Gastrocnemius medialis (tissue), 4 donors: ENCODE measurements at regions of chr16 and their contacts with region 1.

Region 1: GRCh38 chr16:50665128-50665878 is 15.8 kb downstream of the SNX20 start:
- DNase-seq: peak; percentile 47 to 55
- ATAC-seq: peak; percentile 64 to 75
- H3K4me3 ChIP-seq: peak overlapping the region; percentile 55 to 63 (median 56)
- H3K27ac ChIP-seq: peak overlapping the region in 3 of 4 donors; percentile 40 to 64 (median 55)
- H3K4me1 ChIP-seq: peaks cover 16 to 21% of the 10 kb centered on the region in 2 donors
- H3K27me3 ChIP-seq: no peaks in the 10 kb centered on the region
- CTCF ChIP-seq: peak; percentile 70 to 95 (median 81)
- POLR2A ChIP-seq: no peak

Region 2: GRCh38 chr16:50038756-50039529 is 626.4 kb before region 1 on chr16:
- in situ Hi-C with region 1: loop called in 1 of 4 experiments (anchors 10 kb)
- intact Hi-C with region 1: no loop called
- DNase-seq: peak; percentile 24 to 48
- ATAC-seq: no peak
- H3K4me3 ChIP-seq: no peak overlapping the region
- H3K27ac ChIP-seq: peak overlapping the region in 1 of 4 donors; percentile 21
- H3K4me1 ChIP-seq: no peaks in the 10 kb centered on the region
- H3K27me3 ChIP-seq: no peaks in the 10 kb centered on the region
- CTCF ChIP-seq: no peak
- POLR2A ChIP-seq: no peak

Region 3: DNA sequence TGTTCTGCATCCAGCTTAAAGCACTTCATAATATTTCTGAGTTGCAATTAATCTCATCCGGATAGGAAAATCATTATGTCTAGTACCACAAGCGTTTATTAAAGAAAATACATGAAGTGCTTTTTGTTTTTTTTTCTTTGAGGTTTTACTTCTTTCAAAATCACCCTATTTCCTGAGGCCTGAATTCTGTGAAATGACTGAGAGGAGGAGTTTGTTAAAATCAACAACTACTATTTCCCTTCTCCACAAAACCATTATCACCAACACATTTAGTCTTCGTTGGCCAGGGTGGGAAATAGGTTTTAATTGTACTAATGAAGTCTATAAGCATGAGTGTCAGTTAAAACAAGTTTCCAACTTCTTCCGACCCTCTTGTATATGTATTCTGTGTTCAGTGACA is 449.6 kb before region 1 on chr16:
- in situ Hi-C with region 1: loop called (anchors 10 to 25 kb)
- intact Hi-C with region 1: loop called (anchors 1 kb)
- DNase-seq: no peak
- ATAC-seq: no peak
- H3K4me3 ChIP-seq: no peak overlapping the region
- H3K27ac ChIP-seq: no peak overlapping the region
- H3K4me1 ChIP-seq: peaks cover 3 to 7% of the 10 kb centered on the region in 2 donors
- H3K27me3 ChIP-seq: no peaks in the 10 kb centered on the region
- CTCF ChIP-seq: no peak
- POLR2A ChIP-seq: no peak

Region 4: DNA sequence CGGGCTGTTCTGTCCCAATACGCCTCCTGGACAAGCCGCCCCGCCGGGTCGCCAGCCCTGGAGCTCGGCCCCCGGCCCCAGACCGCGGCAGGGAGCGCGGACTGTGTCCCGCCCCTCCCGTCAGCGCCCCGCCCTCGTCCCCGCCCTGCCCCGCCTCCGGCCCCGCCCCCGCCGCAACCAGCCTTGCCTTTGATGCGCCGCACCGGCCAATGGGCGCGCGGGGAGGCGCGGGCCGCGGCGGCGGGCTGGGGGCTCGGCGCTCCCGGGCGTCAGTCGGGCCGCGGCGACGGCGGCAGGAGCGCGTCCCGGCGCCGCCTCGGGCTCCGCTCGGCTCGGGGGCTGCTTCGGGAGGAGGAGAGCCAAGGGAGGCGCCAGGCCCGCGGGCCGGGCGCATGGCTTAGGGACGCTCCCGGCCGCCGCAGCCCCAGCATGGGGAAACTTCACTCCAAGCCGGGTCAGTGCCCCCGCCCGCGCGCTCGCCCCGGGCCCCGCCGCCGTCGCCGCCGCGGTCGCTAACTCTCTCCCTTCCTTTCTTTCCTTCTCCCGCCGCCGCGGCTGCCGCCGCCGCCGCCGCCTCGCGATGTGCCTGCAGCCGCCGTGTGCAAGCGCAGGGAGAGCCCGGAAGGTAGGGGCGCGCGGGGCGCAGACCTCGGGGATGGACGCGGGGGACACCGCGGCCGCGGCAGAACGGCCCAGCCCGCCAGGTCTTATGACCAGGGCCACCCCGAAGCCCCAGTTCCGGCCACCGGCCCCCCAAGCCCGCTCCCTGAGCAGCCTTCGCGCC is 117.0 kb before region 1 on chr16 and contains the start of gene NKD1:
- in situ Hi-C with region 1: no loop called
- intact Hi-C with region 1: loop called (anchors 1 kb)
- DNase-seq: peak; percentile 23 to 31
- ATAC-seq: peak; percentile 89 to 91
- H3K4me3 ChIP-seq: peak within 1 kb of the TSS; percentile 51 to 78 (median 66)
- H3K27ac ChIP-seq: no peak within 1 kb of the TSS
- H3K4me1 ChIP-seq: peaks cover 0 to 9% of the 10 kb centered on the region in 2 donors
- H3K27me3 ChIP-seq: peaks cover 6 to 28% (median 16%) of the 10 kb centered on the region in 3 donors
- CTCF ChIP-seq: no peak
- POLR2A ChIP-seq: peak; percentile 54 to 63
- total RNA-seq, gene NKD1: 0.10 to 0.75 (median 0.19) TPM

Region 5: GRCh38 chr16:50611332-50611934 is 53.9 kb before region 1 on chr16:
- in situ Hi-C with region 1: no loop called
- intact Hi-C with region 1: no loop called
- DNase-seq: no peak
- ATAC-seq: no peak
- H3K4me3 ChIP-seq: no peak overlapping the region
- H3K27ac ChIP-seq: no peak overlapping the region
- H3K4me1 ChIP-seq: peaks cover 0 to 12% of the 10 kb centered on the region in 2 donors
- H3K27me3 ChIP-seq: no peaks in the 10 kb centered on the region
- CTCF ChIP-seq: no peak
- POLR2A ChIP-seq: no peak

Region 6: GRCh38 chr16:50635505-50636392 is 29.6 kb before region 1 on chr16:
- in situ Hi-C with region 1: no loop called
- intact Hi-C with region 1: no loop called
- DNase-seq: no peak
- ATAC-seq: no peak
- H3K4me3 ChIP-seq: no peak overlapping the region
- H3K27ac ChIP-seq: no peak overlapping the region
- H3K4me1 ChIP-seq: no peaks in the 10 kb centered on the region
- H3K27me3 ChIP-seq: no peaks in the 10 kb centered on the region
- CTCF ChIP-seq: no peak
- POLR2A ChIP-seq: no peak

Region 7: DNA sequence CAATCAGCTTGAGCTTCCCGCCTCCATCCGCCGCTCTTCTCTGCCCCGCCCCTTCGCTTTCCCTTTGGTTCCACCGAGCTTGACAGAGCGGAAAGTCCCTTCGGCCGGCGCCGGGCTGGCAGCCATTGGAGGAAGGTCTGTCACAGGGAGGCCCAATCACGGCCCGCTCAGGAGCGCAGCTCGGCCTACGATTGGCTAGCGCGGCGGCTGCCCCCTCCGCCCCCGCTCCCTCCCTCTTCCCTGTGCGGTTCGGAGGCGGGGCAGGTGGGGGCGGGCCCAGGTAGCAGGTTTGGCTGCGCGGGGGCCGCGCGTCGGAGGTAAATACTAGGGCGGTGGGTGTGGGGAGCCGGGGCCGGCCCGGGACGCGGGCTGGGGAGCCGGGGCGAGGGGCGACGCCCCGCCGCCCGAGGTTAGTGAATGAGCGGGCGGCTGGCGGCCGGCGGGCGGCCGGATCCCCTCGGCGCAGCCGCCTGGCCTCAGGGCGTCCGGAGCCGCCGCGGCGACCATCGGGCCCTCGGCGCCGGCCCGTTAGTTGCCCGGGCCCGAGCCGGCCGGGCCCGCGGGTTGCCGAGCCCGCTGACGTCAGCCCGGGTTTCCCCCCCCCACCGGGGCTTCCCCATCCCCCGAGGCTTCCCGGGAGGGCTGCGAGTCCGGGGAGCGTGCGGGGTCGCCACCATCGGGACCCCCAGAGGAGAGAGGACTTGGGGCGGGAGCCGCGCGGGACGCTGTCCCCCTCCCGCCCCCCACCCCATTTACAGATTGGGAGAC is 76.7 kb after region 1 on chr16 and contains the start of gene CYLD:
- in situ Hi-C with region 1: no loop called
- intact Hi-C with region 1: loop called (anchors 2 kb)
- DNase-seq: peak; percentile 100
- ATAC-seq: peak; percentile 89 to 95
- H3K4me3 ChIP-seq: peak within 1 kb of the TSS; percentile 61 to 98 (median 90)
- H3K27ac ChIP-seq: peak within 1 kb of the TSS; percentile 85 to 99 (median 93)
- H3K4me1 ChIP-seq: peaks cover 29 to 40% of the 10 kb centered on the region in 2 donors
- H3K27me3 ChIP-seq: no peaks in the 10 kb centered on the region
- CTCF ChIP-seq: no peak
- POLR2A ChIP-seq: peak; percentile 88 to 97
- total RNA-seq, gene CYLD: 49.2 to 177 (median 135) TPM

Region 8: GRCh38 chr16:50816901-50817555 is 151.7 kb after region 1 on chr16:
- in situ Hi-C with region 1: no loop called
- intact Hi-C with region 1: no loop called
- DNase-seq: no peak
- ATAC-seq: no peak
- H3K4me3 ChIP-seq: no peak overlapping the region
- H3K27ac ChIP-seq: no peak overlapping the region
- H3K4me1 ChIP-seq: no peaks in the 10 kb centered on the region
- H3K27me3 ChIP-seq: no peaks in the 10 kb centered on the region
- CTCF ChIP-seq: no peak
- POLR2A ChIP-seq: no peak